PC-9 (cell line): ENCODE measurements at regions of chr5 and their contacts with region 1.

Region 1: DNA sequence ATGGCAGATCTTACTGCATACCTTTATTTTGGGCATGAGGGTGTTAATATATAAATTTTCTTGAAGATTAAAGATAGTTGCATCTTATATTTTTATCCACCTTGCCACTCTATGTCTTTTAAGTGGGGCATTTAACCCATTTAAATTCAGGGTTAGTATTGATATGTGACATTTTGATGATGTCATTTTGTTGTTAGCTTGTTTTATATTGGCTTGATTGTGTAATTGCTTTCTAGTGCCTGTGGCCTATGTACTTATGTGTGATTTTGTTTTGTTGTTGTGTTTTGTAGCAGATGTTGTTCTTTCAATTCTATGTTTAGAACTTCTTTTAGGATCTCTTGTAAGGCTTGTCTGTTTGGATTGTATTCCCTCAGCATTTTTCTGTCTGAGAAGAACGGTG is 939.9 kb upstream of the CDH9 start:
- DNase-seq: no peak
- H3K4me3 ChIP-seq: no peak overlapping the region
- H3K27ac ChIP-seq: no peak overlapping the region
- H3K4me1 ChIP-seq: no peaks in the 10 kb centered on the region
- H3K27me3 ChIP-seq: no peaks in the 10 kb centered on the region
- CTCF ChIP-seq: no peak

Region 2: DNA sequence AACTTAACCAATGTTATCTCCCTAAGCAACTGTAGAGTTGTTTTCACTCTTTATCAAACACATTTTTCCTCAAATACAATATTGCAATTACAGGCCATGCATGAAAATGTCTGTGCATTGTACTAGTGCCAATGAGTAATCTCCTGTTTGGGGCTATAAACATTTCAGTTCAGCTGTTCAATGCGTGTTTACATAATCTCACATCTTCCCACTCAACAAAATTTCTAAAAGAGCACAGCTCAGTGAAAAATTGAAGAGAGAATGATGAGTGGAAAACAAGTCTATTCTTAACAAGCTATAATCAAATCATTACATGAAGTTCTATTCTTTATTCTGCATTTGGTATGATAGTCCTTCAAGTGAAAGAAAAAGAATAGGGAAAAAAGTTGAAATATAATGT is 159.4 kb before region 1 on chr5:
- CTCF ChIA-PET with region 1: no interaction called
- POLR2A ChIA-PET with region 1: no interaction called
- intact Hi-C with region 1: no loop called
- DNase-seq: no peak
- H3K4me3 ChIP-seq: no peak overlapping the region
- H3K27ac ChIP-seq: no peak overlapping the region
- H3K4me1 ChIP-seq: no peaks in the 10 kb centered on the region
- H3K27me3 ChIP-seq: no peaks in the 10 kb centered on the region
- CTCF ChIP-seq: no peak

Region 3: DNA sequence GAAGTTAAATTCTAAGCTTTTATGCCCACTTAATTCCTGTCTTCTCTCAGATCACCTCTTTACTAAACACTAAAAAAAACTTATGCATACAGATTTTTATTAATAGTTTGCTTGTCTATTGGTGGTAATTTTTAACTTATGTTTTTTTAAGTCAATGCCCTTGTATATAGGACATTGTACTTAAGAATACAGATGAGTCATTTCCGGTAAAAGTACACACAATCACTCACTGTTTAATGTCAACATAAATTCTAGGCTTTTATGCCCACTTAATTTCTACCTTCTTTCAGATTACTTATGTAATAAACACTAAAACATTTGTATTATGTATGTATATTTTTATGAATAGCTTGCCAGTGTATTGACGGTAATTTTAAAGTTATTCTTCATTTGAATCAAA is 67.1 kb before region 1 on chr5:
- CTCF ChIA-PET with region 1: no interaction called
- POLR2A ChIA-PET with region 1: interaction called, 10 read pairs
- intact Hi-C with region 1: no loop called
- DNase-seq: no peak
- H3K4me3 ChIP-seq: no peak overlapping the region
- H3K27ac ChIP-seq: no peak overlapping the region
- H3K4me1 ChIP-seq: no peaks in the 10 kb centered on the region
- H3K27me3 ChIP-seq: no peaks in the 10 kb centered on the region
- CTCF ChIP-seq: no peak